SK-N-SH (cell line): ENCODE measurements at regions of chr16 and their contacts with region 1.

Region 1: GRCh38 chr16:53755536-53755910 is 51.6 kb downstream of the FTO start:
- DNase-seq: no peak
- H3K4me3 ChIP-seq: no peak overlapping the region
- H3K27ac ChIP-seq: no peak overlapping the region
- H3K4me1 ChIP-seq: peaks cover 7 to 9% of the 10 kb centered on the region in 2 experiments; a peak in 2 of 4 replicates
- H3K27me3 ChIP-seq: no peaks in the 10 kb centered on the region
- CTCF ChIP-seq: no peak
- EP300 ChIP-seq: no peak; a peak in 1 of 4 replicates
- RAD21 ChIP-seq: no peak

Region 2: GRCh38 chr16:53692142-53692541 is 63.4 kb before region 1 on chr16:
- CTCF ChIA-PET with region 1: no interaction called
- POLR2A ChIA-PET with region 1: no interaction called
- DNase-seq: no peak
- H3K4me3 ChIP-seq: no peak overlapping the region
- H3K27ac ChIP-seq: no peak overlapping the region
- H3K4me1 ChIP-seq: peaks cover 0 to 2% of the 10 kb centered on the region in 2 experiments; a peak in 2 of 4 replicates
- H3K27me3 ChIP-seq: no peaks in the 10 kb centered on the region
- CTCF ChIP-seq: no peak
- EP300 ChIP-seq: no peak
- RAD21 ChIP-seq: no peak

Region 3: GRCh38 chr16:53743149-53743566 is 12.4 kb before region 1 on chr16:
- CTCF ChIA-PET with region 1: interaction called, 37 read pairs
- POLR2A ChIA-PET with region 1: no interaction called
- DNase-seq: no peak
- H3K4me3 ChIP-seq: no peak overlapping the region; a peak in 1 of 4 replicates
- H3K27ac ChIP-seq: no peak overlapping the region
- H3K4me1 ChIP-seq: peaks cover 0 to 19% of the 10 kb centered on the region in 2 experiments; a peak in 2 of 4 replicates
- H3K27me3 ChIP-seq: no peaks in the 10 kb centered on the region
- CTCF ChIP-seq: peak; percentile 69
- EP300 ChIP-seq: no peak
- RAD21 ChIP-seq: peak; percentile 41